Panc1 (cell line): ENCODE measurements at regions of chr3 and their contacts with region 1.

Region 1: DNA sequence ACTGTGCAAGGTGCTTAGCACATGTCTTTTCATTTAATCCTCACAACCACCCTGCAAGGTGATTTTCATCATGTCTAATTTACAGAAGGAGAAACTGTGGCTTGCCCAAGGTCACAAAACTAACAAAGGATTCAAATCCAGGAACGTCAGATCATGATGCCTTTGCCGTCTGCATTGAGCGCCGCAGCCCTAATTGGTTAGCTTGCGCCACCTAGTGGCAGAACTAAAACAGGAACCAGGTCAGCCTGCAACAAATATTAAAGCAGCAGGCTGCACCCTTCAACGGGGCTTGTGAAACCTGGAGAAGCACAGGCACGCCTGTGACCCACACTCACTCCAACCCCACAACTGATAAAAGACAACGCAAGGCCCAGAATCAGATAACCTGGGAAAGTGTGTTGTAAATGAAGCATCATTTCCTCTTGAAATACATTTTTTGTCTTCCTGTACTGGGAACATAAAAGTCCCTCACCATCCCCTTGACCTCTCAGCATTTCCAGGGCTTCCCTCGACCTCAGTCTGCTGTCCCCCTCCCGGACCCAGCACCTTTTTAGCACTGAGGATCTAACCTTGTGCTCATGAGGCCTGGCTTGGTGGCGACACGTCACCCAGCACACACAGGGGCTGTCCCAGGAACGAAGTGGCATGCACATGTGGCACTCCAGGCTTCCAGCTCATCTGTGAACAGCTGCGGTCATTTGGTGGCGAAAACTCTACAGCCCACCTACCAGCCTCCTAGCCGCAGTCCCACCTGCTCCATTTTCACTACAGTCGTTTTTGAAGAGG is 17.3 kb downstream of the DPH3 start:
- DNase-seq: peak; percentile 61
- ATAC-seq: peak; percentile 92
- H3K4me3 ChIP-seq: no peak overlapping the region
- H3K27ac ChIP-seq: no peak overlapping the region
- H3K4me1 ChIP-seq: no peaks in the 10 kb centered on the region
- H3K27me3 ChIP-seq: no peaks in the 10 kb centered on the region
- CTCF ChIP-seq: peak; percentile 88

Region 2: DNA sequence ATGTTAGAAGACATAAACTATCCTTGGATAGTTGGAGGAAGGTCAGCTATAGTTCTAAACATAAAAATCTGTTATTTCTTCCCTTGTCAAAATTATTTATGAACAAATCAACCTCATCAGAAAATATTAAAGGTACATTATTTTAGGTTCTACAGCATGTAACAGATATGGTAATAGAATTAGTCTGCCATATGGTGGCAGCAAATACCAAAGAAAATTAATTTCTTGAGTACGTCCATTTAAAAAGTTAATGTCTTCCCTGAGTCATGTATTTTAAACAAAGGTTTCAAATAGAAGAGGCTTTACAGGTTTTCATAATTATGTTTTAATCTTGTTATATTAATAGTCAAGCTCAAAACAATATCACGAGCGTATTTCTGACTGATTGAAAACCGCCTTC is 431.8 kb before region 1 on chr3:
- CTCF ChIA-PET with region 1: interaction called, 7 read pairs
- POLR2A ChIA-PET with region 1: no interaction called
- in situ Hi-C with region 1: no loop called
- intact Hi-C with region 1: loop called (anchors 1 kb)
- DNase-seq: no peak
- ATAC-seq: peak; percentile 56; the same call in 1 of the 2 replicates
- H3K4me3 ChIP-seq: no peak overlapping the region
- H3K27ac ChIP-seq: peak overlapping the region; percentile 71; the same call in 1 of the 2 replicates
- H3K4me1 ChIP-seq: peaks cover 37% of the 10 kb centered on the region; the same call in 1 of the 2 replicates
- H3K27me3 ChIP-seq: no peaks in the 10 kb centered on the region
- CTCF ChIP-seq: peak; percentile 32; the same call in 1 of the 2 replicates

Region 3: DNA sequence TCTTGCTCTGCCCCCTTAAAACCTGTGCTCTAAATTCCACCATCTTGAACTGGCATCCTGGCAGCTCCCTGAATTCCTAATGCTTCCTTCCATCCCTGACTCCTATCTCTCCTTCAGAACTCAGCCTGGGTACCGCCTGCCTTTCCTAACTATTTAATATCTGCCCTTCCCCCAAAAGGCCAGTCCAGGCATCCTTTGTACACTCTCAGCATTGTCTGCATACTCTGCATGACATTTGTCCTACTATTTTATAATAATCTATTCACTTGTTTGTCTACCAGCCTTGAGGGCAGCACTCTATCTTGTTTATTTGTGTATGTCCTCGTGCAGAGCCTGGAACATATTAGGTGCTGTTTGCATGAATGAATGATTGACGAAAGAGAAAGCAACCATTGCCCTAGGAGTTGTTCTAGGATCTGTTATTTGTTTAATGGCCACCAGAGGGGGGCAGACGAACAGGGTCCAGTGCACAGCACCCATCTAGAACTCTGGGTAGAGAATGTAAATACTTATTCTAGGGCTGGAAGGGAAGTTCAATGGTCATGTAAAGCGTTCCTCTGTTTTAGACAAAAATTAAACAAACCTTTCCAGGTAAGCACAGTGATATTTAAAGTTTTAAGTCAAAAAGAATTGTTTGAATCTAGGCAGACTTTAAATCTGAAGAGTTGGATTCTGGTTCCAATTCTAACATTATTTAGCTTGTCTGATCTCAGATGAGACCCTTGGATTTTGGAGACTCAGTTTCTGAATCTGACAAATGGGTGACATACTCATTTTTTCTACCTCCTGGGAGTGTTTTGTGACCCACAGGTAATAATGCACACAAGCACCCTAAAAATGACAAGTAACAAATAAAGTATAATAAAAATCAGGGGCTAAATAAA is 198.8 kb before region 1 on chr3:
- CTCF ChIA-PET with region 1: interaction called, 3 read pairs
- POLR2A ChIA-PET with region 1: no interaction called
- in situ Hi-C with region 1: no loop called
- intact Hi-C with region 1: loop called (anchors 1 kb)
- DNase-seq: no peak
- ATAC-seq: peak; percentile 99
- H3K4me3 ChIP-seq: no peak overlapping the region
- H3K27ac ChIP-seq: peak overlapping the region; percentile 66
- H3K4me1 ChIP-seq: peaks cover 6% of the 10 kb centered on the region
- H3K27me3 ChIP-seq: no peaks in the 10 kb centered on the region
- CTCF ChIP-seq: peak; percentile 79

Region 4: GRCh38 chr3:16064642-16065414 is 182.6 kb before region 1 on chr3:
- CTCF ChIA-PET with region 1: no interaction called
- POLR2A ChIA-PET with region 1: no interaction called
- in situ Hi-C with region 1: no loop called
- intact Hi-C with region 1: loop called (anchors 5 kb)
- DNase-seq: no peak
- ATAC-seq: no peak
- H3K4me3 ChIP-seq: no peak overlapping the region
- H3K27ac ChIP-seq: peak overlapping the region; percentile 54; the same call in 1 of the 2 replicates
- H3K4me1 ChIP-seq: peaks cover 44% of the 10 kb centered on the region
- H3K27me3 ChIP-seq: no peaks in the 10 kb centered on the region
- CTCF ChIP-seq: no peak

Region 5: GRCh38 chr3:16183601-16184270 is 63.7 kb before region 1 on chr3:
- CTCF ChIA-PET with region 1: no interaction called
- POLR2A ChIA-PET with region 1: no interaction called
- in situ Hi-C with region 1: no loop called
- intact Hi-C with region 1: loop called (anchors 10 kb)
- DNase-seq: no peak
- ATAC-seq: no peak
- H3K4me3 ChIP-seq: no peak overlapping the region
- H3K27ac ChIP-seq: no peak overlapping the region
- H3K4me1 ChIP-seq: no peaks in the 10 kb centered on the region
- H3K27me3 ChIP-seq: no peaks in the 10 kb centered on the region
- CTCF ChIP-seq: no peak